CD8-positive, alpha-beta memory T cell (primary cell): ENCODE measurements at regions of chr2 and their contacts with region 1.

Region 1: DNA sequence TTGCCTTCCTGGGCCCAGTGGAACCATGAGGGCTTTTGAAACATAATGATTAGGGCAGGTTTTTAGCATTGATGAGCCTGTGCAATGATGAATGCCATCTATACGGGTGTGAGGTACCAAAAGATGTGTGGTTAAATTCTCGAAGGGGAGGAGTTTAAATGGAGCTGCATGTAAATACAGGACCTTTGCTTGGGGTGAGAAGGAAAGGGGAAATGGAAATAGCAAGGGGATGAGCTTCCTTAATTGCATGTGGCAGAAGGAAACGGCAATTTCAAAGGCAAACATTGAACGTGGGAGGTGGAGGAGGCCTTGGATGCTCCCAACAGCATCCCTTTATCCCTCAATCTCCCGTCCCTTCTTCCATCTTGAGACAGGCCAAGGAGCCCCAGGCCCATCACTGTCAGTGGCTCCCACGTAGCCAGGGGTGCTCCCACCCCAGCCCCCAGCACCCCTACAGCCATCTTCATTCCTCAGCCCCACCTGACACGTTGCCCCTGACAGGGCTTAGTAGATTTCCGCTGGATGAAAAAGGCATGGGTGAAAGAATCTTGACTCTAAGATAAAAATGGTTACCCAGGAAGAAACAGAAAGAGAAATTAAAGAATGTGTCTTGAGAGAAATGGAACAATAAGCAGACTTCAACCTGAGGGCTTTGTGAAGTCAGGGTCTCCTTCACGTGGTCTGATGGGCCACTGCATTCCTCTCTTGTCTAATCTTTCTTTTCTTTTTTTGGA is 32.5 kb downstream of the INPP5D start:
- DNase-seq: no peak
- H3K4me3 ChIP-seq: no peak overlapping the region
- H3K4me3 Mint-ChIP-seq: peak overlapping the region in 3 of 7 donors; percentile 23 to 32 (median 25)
- H3K27ac ChIP-seq: no peak overlapping the region
- H3K27ac Mint-ChIP-seq: peak overlapping the region; percentile 24 to 91 (median 70)
- H3K4me1 ChIP-seq: peaks cover 38% of the 10 kb centered on the region
- H3K4me1 Mint-ChIP-seq: peaks cover 61 to 87% (median 87%) of the 10 kb centered on the region in 3 donors
- H3K27me3 ChIP-seq: no peaks in the 10 kb centered on the region
- H3K27me3 Mint-ChIP-seq: no peaks in the 10 kb centered on the region

Region 2: GRCh38 chr2:233075966-233076339 is 16.6 kb before region 1 on chr2:
- CTCF ChIA-PET with region 1: interaction called, 4 read pairs
- POLR2A ChIA-PET with region 1: interaction called, 13 read pairs
- DNase-seq: peak in 3 of 5 donors; percentile 49 to 68 (median 66)
- H3K4me3 ChIP-seq: peak overlapping the region; percentile 60
- H3K4me3 Mint-ChIP-seq: no peak overlapping the region
- H3K27ac ChIP-seq: peak overlapping the region; percentile 38
- H3K27ac Mint-ChIP-seq: no peak overlapping the region
- H3K4me1 ChIP-seq: peaks cover 84% of the 10 kb centered on the region
- H3K4me1 Mint-ChIP-seq: peaks cover 35 to 51% (median 45%) of the 10 kb centered on the region in 3 donors
- H3K27me3 ChIP-seq: no peaks in the 10 kb centered on the region
- H3K27me3 Mint-ChIP-seq: no peaks in the 10 kb centered on the region

Region 3: GRCh38 chr2:233210843-233211547 is 118.4 kb after region 1 on chr2:
- CTCF ChIA-PET with region 1: no interaction called
- POLR2A ChIA-PET with region 1: no interaction called
- DNase-seq: no peak
- H3K4me3 ChIP-seq: no peak overlapping the region
- H3K4me3 Mint-ChIP-seq: no peak overlapping the region
- H3K27ac ChIP-seq: no peak overlapping the region
- H3K27ac Mint-ChIP-seq: peak overlapping the region in 3 of 8 donors; percentile 63 to 79 (median 63)
- H3K4me1 ChIP-seq: no peaks in the 10 kb centered on the region
- H3K4me1 Mint-ChIP-seq: peaks cover 11 to 18% (median 15%) of the 10 kb centered on the region in 3 donors
- H3K27me3 ChIP-seq: no peaks in the 10 kb centered on the region
- H3K27me3 Mint-ChIP-seq: no peaks in the 10 kb centered on the region